OCI-LY7 (cell line): ENCODE measurements at regions of chr6 and their contacts with region 1.

Region 1: GRCh38 chr6:38702558-38703397 is at the start of gene GLO1:
- DNase-seq: peak; percentile 98
- H3K4me3 ChIP-seq: peak within 1 kb of the TSS; percentile 86
- H3K27ac ChIP-seq: peak within 1 kb of the TSS; percentile 32
- H3K4me1 ChIP-seq: peaks cover 12% of the 10 kb centered on the region
- CTCF ChIP-seq: no peak
- total RNA-seq, gene GLO1: 93.2 and 97.1 TPM in 2 replicates

Region 2: GRCh38 chr6:38929560-38929959 is 226.8 kb after region 1 on chr6:
- CTCF ChIA-PET with region 1: no interaction called
- POLR2A ChIA-PET with region 1: no interaction called
- intact Hi-C with region 1: no loop called
- DNase-seq: no peak
- H3K4me3 ChIP-seq: no peak overlapping the region
- H3K27ac ChIP-seq: no peak overlapping the region
- H3K4me1 ChIP-seq: no peaks in the 10 kb centered on the region
- CTCF ChIP-seq: no peak

Region 3: GRCh38 chr6:39114704-39115599 is 412.2 kb after region 1 on chr6 and contains the start of gene SAYSD1:
- CTCF ChIA-PET with region 1: no interaction called
- POLR2A ChIA-PET with region 1: no interaction called
- intact Hi-C with region 1: loop called (anchors 5 kb)
- DNase-seq: peak; percentile 96
- H3K4me3 ChIP-seq: peak within 1 kb of the TSS; percentile 72
- H3K27ac ChIP-seq: peak within 1 kb of the TSS; percentile 77
- H3K4me1 ChIP-seq: peaks cover 18% of the 10 kb centered on the region
- CTCF ChIP-seq: no peak
- total RNA-seq, gene SAYSD1: 14.1 and 15.6 TPM in 2 replicates